Heart right ventricle (tissue), 16 donors: ENCODE measurements at regions of chr9 and their contacts with region 1.

Region 1: DNA sequence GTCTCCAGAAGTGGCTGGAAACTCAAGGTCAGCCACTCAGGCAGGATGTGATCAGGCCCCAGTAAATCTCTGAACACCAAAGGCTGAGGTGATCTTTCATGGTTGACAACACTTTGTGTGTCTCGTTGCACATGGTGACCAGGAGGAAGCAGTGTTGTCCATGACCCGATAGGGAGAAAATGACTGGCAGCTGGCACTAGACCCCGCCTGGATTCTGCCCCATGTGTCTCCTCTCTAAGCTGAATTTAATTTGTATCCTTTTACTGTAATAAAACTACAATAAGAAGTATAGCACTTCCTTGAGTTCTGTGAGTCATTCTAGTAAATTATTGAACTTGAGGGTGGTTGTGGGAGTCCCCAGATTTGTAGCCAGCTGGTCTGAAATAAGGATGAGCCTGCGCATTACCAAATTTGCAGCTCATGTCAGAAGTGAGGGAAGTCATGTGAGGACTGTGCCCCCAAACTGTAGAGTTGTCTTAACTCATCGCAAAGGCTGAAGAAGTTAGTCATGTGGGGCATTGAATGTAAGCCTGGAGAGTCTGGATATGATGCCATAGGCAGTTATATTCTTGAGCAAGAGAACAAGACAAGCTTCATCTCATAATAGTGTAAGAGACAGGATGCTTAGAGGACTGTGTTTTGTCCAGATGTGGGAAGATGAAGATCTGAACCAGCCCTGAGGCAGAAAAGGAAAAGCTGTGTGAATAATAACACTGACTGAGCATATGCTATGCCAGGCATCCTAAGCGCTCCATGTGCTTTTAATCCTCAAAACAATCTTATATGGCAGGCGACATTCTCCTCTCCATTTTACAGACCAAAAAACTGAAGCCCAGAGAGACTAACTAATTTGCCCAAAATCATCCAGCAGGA is 55.9 kb downstream of the TMEM215 start:
- DNase-seq: no peak
- ATAC-seq: no peak
- H3K4me3 ChIP-seq: no peak overlapping the region
- H3K27ac ChIP-seq: no peak overlapping the region
- H3K4me1 ChIP-seq: no peaks in the 10 kb centered on the region
- H3K27me3 ChIP-seq: peaks cover 0 to 21% (median under 1%) of the 10 kb centered on the region in 7 donors
- CTCF ChIP-seq: no peak

Region 2: GRCh38 chr9:32783169-32783891 is 55.9 kb before region 1 on chr9 and contains the start of gene TMEM215:
- intact Hi-C with region 1: loop called in 1 of 10 experiments (anchors 10 kb)
- DNase-seq: no peak
- ATAC-seq: peak in 2 of 8 donors; percentile 16 to 37
- H3K4me3 ChIP-seq: peak within 1 kb of the TSS in 6 of 10 donors; percentile 14 to 39 (median 22)
- H3K27ac ChIP-seq: no peak within 1 kb of the TSS
- H3K4me1 ChIP-seq: peaks cover 0 to 11% (median 0%) of the 10 kb centered on the region in 9 donors
- H3K27me3 ChIP-seq: peaks cover 8 to 73% (median 62%) of the 10 kb centered on the region in 7 donors
- CTCF ChIP-seq: no peak
- total RNA-seq, gene TMEM215: not detected

Region 3: GRCh38 chr9:32906213-32906612 is 67.0 kb after region 1 on chr9:
- intact Hi-C with region 1: loop called in 1 of 10 experiments (anchors 10 kb)
- DNase-seq: no peak
- ATAC-seq: no peak
- H3K4me3 ChIP-seq: no peak overlapping the region
- H3K27ac ChIP-seq: no peak overlapping the region
- H3K4me1 ChIP-seq: no peaks in the 10 kb centered on the region
- H3K27me3 ChIP-seq: peaks cover 0 to 62% (median 0%) of the 10 kb centered on the region in 7 donors
- CTCF ChIP-seq: no peak